Cardiac septum (tissue), 1 donor: ENCODE measurements at regions of chr2 and their contacts with region 1.

Region 1: GRCh38 chr2:195575879-195576401 is 81.1 kb upstream of the SLC39A10 start:
- DNase-seq: no peak

Region 2: GRCh38 chr2:195160963-195161362 is 415.0 kb before region 1 on chr2:
- intact Hi-C with region 1: no loop called
- DNase-seq: no peak

Region 3: GRCh38 chr2:195535911-195536522 is 39.9 kb before region 1 on chr2:
- intact Hi-C with region 1: no loop called
- DNase-seq: no peak

Region 4: GRCh38 chr2:195695002-195695631 is 119.2 kb after region 1 on chr2:
- intact Hi-C with region 1: no loop called
- DNase-seq: no peak

Region 5: GRCh38 chr2:196068271-196069209 is 492.6 kb after region 1 on chr2 and contains the start of gene DNAH7:
- intact Hi-C with region 1: loop called (anchors 10 kb)
- DNase-seq: peak; percentile 96
- total RNA-seq, gene DNAH7: 0.32 TPM